Activated CD4-positive, alpha-beta T cell treated with anti-CD3 and anti-CD28 coated beads, Interleukin-2, amount 10 ng/mL, durations not matched to agents 24 days and 14 days (primary cell): ENCODE measurements at regions of chr6 and their contacts with region 1.

Region 1: DNA sequence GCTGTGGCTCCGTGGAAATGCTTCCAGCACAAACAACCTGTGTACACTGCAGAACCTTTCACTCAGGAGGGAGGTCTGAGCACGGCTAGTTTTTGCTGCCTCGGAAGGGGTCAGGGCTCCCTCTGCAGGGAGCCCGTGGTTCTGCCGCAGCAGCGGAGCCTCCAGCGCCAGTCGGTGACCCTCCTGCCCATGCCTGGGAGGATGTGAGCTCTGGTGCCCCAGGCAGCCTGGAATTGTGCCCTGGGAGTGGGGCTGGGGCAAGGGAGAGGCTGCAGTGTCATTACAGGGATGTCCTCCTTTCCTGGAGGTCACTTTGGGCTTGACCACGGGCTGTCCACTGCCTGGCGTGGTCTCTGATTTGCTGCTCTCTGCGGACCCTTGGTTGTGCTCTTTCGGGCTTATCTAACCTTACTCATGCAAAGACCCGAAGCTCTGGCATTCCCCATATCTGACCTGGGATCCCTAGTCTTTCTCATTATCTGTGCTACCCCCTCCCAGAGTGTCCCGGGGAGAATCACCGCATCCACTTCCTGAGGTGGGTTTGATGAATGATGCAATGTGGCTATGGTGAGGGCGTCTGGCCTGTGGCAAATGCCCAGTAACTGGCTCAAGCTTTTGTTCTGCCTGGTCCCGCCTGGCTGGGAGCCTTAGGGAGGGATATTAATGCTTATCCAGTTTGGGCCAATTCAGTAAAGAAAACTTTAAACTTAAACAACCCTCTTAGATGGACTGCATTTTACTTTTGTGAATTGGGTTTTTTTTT is 59.6 kb upstream of the TAGAP start:
- DNase-seq: peak; percentile 93
- H3K4me3 Mint-ChIP-seq: peak overlapping the region; percentile 77
- H3K27ac Mint-ChIP-seq: peak overlapping the region; percentile 85
- H3K4me1 Mint-ChIP-seq: peaks cover 68% of the 10 kb centered on the region
- H3K27me3 Mint-ChIP-seq: no peaks in the 10 kb centered on the region

Region 2: GRCh38 chr6:158729914-158730907 is 374.1 kb before region 1 on chr6:
- intact Hi-C with region 1: loop called (anchors 10 kb)
- DNase-seq: no peak
- H3K4me3 Mint-ChIP-seq: no peak overlapping the region
- H3K27ac Mint-ChIP-seq: peak overlapping the region; percentile 5
- H3K4me1 Mint-ChIP-seq: peaks cover 8% of the 10 kb centered on the region
- H3K27me3 Mint-ChIP-seq: no peaks in the 10 kb centered on the region

Region 3: DNA sequence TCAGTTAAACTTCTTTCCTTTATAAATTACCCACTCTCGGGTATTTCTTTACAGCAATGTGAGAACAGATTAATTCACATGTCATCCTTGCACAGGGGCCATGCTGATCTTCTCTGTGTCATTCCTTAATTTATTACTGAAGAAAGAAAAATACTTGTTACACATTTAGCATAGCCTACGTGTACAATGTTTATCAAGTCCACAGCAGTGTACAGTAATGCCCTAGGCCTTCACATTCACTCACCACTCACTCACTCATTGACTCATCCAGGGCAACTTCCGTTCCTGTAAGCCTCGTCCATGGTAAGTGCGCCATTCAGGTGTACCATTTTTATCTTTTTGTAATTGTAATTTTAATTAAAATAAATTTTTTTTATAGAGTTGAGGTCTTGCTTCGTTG is 177.9 kb before region 1 on chr6:
- intact Hi-C with region 1: no loop called
- DNase-seq: no peak
- H3K4me3 Mint-ChIP-seq: no peak overlapping the region
- H3K27ac Mint-ChIP-seq: no peak overlapping the region
- H3K4me1 Mint-ChIP-seq: no peaks in the 10 kb centered on the region
- H3K27me3 Mint-ChIP-seq: peaks cover 2% of the 10 kb centered on the region

Region 4: GRCh38 chr6:159008656-159009288 is 95.6 kb before region 1 on chr6:
- intact Hi-C with region 1: loop called (anchors 1 kb)
- DNase-seq: peak; percentile 71
- H3K4me3 Mint-ChIP-seq: peak overlapping the region; percentile 16
- H3K27ac Mint-ChIP-seq: peak overlapping the region; percentile 34
- H3K4me1 Mint-ChIP-seq: peaks cover 29% of the 10 kb centered on the region
- H3K27me3 Mint-ChIP-seq: no peaks in the 10 kb centered on the region

Region 5: DNA sequence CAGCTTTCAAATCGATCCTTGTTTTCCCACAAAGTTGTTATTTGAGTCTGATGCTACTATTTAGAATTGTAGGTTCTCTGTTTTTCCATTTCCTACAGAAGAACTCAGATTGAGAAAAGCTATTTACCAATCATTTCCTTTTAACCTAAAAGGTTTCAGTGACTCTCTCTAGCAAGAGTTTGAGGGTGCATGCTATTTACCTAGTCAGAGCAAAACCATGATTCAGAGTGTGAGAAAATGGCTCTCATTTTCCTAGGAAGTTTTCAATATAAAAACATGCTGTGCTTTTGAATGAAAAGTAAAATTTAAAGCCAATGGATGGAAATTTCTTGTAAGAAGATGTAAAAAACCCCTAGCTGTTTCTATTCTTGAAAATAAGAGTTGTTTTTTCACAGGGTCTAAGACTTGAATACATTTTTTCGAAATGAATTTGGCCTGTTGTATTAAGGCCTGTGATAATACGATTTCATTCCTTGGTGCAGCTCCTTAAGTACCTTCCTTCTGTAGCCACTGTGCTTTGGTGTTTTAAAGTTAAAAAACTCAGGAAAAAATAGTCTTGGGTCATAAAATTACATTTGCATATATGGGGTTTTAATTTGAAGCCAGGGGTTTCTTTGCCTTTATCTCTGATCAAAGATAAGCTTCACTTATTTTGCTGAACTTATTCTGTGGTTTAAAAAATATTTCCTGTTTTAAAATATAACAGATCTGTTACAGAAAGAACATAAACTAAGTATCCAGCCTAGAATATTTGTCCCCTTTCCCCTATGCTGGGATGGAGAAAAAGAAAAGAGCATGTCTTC is 86.4 kb before region 1 on chr6:
- intact Hi-C with region 1: loop called (anchors 1 kb)
- DNase-seq: no peak
- H3K4me3 Mint-ChIP-seq: peak overlapping the region; percentile 45
- H3K27ac Mint-ChIP-seq: peak overlapping the region; percentile 79
- H3K4me1 Mint-ChIP-seq: peaks cover 42% of the 10 kb centered on the region
- H3K27me3 Mint-ChIP-seq: no peaks in the 10 kb centered on the region

Region 6: DNA sequence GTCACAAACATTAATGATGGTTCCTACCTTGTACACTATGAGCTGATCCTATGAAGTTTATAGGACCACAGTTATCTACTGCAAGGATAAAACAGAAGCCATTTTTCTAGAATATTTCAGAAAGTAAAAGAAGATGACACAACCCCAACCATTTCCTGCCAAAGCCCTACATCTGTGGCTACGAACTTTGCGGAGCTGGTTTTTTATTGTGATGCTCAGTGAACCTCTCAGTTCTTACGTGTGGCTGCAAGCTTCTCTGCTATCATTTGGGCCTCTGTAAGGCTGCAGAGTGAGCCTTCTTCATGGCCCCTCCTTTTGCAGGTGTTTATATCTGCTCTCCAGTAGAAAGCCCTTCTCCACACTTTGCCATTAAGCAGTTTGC is 41.8 kb before region 1 on chr6:
- intact Hi-C with region 1: no loop called
- DNase-seq: peak; percentile 92
- H3K4me3 Mint-ChIP-seq: peak overlapping the region; percentile 62
- H3K27ac Mint-ChIP-seq: peak overlapping the region; percentile 94
- H3K4me1 Mint-ChIP-seq: peaks cover 83% of the 10 kb centered on the region
- H3K27me3 Mint-ChIP-seq: no peaks in the 10 kb centered on the region

Region 7: GRCh38 chr6:159134701-159135364 is 30.5 kb after region 1 on chr6:
- intact Hi-C with region 1: loop called (anchors 1 kb)
- DNase-seq: peak; percentile 93
- H3K4me3 Mint-ChIP-seq: no peak overlapping the region
- H3K27ac Mint-ChIP-seq: no peak overlapping the region
- H3K4me1 Mint-ChIP-seq: peaks cover 6% of the 10 kb centered on the region
- H3K27me3 Mint-ChIP-seq: peaks cover 31% of the 10 kb centered on the region

Region 8: DNA sequence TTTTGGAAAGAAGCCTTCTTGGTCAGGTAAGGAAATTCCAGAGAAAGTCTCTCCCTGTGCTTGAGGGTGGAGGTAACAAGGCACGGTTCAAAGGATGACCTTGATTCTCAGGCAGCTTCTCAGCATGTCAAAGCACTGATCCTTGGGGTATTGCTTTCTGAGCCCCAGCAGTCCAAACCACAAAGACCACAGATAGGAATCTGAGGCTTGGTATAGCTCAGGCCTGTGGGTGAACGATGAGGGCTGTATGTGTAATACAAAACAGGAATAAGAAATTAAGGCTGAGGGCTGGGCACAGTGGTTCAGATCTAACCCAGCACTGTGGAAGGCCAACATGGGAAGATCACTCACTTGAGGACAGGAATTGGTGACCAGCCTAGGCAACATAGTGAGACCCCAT is 947.0 kb after region 1 on chr6:
- intact Hi-C with region 1: no loop called
- DNase-seq: peak; percentile 67
- H3K4me3 Mint-ChIP-seq: peak overlapping the region; percentile 8
- H3K27ac Mint-ChIP-seq: peak overlapping the region; percentile 18
- H3K4me1 Mint-ChIP-seq: peaks cover 21% of the 10 kb centered on the region
- H3K27me3 Mint-ChIP-seq: no peaks in the 10 kb centered on the region